Calu3 (cell line): ENCODE measurements at regions of chr1 and their contacts with region 1.

Region 1: GRCh38 chr1:234862944-234863515 is 253.1 kb upstream of the IRF2BP2 start:
- DNase-seq: no peak
- H3K4me3 Mint-ChIP-seq: no peak overlapping the region
- H3K27ac Mint-ChIP-seq: no peak overlapping the region
- H3K4me1 Mint-ChIP-seq: peaks cover 56% of the 10 kb centered on the region
- H3K27me3 Mint-ChIP-seq: no peaks in the 10 kb centered on the region
- CTCF ChIP-seq: no peak

Region 2: DNA sequence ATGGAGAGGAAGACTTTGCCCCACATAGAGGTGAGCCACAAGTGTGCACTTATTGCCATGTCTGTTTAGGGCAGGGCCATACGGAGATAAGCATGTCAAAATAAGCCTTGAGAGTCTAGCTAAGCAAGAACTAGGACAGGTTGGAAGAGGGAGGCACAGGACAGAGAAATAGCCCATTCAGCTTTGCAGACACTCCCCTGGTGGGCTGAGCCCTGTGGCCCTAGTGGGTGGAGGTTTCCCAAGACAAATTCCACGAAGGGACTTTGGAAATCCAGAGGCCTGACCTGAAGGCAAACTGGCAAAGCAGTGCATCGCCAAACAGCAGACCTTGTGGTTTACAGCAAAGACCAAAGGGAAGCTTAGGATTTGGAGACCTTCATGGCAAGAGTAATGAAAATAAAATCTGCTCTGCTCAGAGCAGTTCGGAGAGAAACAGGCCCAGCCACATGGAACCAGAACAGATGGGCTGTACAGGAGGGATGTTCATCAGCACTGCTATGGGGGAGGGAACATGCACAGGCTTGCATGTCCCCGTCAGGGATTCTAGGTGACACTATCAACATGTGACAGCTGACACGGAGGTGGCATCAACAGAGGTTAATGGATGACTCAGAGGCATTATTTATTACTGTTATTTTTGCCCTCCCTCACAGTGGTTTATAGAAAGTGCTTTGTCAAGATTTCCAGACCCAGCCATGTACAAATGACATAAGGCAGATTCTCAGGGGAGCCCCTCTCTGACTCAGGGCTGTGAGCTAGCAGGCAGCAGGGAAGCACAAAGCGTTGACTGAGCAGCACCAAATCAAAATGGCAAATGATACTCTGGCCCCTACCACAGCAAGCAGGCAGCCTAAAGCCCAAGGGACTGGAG is 163.0 kb before region 1 on chr1:
- CTCF ChIA-PET with region 1: no interaction called
- intact Hi-C with region 1: no loop called
- DNase-seq: no peak
- H3K4me3 Mint-ChIP-seq: no peak overlapping the region
- H3K27ac Mint-ChIP-seq: no peak overlapping the region
- H3K4me1 Mint-ChIP-seq: peaks cover 34% of the 10 kb centered on the region
- H3K27me3 Mint-ChIP-seq: no peaks in the 10 kb centered on the region
- CTCF ChIP-seq: no peak

Region 3: GRCh38 chr1:234772345-234773147 is 90.5 kb before region 1 on chr1:
- CTCF ChIA-PET with region 1: no interaction called
- intact Hi-C with region 1: loop called (anchors 5 kb)
- DNase-seq: peak; percentile 93
- H3K4me3 Mint-ChIP-seq: peak overlapping the region; percentile 34
- H3K27ac Mint-ChIP-seq: peak overlapping the region; percentile 93
- H3K4me1 Mint-ChIP-seq: peaks cover 32% of the 10 kb centered on the region
- H3K27me3 Mint-ChIP-seq: no peaks in the 10 kb centered on the region
- CTCF ChIP-seq: no peak

Region 4: DNA sequence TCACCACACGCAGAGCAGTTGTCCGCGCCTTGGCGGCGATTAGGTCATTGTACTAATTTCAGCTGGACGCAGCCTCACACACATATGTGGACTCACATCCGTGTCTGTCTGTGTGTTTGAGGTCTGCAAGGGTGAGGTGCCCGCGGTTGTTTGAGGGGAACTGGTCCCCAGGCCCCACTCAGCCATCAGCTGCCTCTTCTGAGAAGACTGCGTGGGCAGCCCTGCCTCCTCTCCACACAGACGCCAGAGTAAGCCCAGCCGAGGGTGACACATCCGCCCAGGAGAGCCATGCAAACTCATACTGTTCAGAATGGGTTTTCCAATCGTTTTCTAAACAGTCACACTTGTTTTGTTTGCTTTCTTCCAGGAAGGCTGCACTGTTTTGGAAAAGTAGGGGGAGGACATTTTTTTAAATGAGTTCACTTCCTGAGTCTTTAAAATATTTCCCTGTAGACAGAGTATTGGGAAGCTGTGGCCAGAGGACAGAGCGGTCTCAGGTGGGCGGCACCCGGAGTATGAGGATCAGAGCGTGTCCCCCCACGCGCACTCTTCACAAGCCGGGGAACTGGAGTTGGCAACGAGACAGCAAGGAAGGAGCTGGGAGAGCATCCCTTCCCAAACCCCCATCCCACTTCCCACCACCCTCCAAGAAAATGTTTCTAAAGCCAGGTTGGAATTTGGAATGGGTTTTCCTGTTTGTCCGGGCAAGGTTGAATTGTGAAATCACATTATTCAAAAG is 212.3 kb after region 1 on chr1:
- CTCF ChIA-PET with region 1: no interaction called
- intact Hi-C with region 1: loop called (anchors 5 kb)
- DNase-seq: peak; percentile 73
- H3K4me3 Mint-ChIP-seq: peak overlapping the region; percentile 50
- H3K27ac Mint-ChIP-seq: peak overlapping the region; percentile 98
- H3K4me1 Mint-ChIP-seq: peaks cover 35% of the 10 kb centered on the region
- H3K27me3 Mint-ChIP-seq: no peaks in the 10 kb centered on the region
- CTCF ChIP-seq: no peak